MCF 10A (cell line): ENCODE measurements at regions of chr18 and their contacts with region 1.

Region 1: GRCh38 chr18:12639990-12640880 is 17.7 kb downstream of the SPIRE1 start:
- DNase-seq: peak; percentile 79
- H3K4me3 Mint-ChIP-seq: peak overlapping the region; percentile 36
- H3K27ac Mint-ChIP-seq: peak overlapping the region; percentile 92
- H3K4me1 Mint-ChIP-seq: peaks cover 45% of the 10 kb centered on the region
- H3K27me3 Mint-ChIP-seq: no peaks in the 10 kb centered on the region
- CTCF ChIP-seq: no peak

Region 2: DNA sequence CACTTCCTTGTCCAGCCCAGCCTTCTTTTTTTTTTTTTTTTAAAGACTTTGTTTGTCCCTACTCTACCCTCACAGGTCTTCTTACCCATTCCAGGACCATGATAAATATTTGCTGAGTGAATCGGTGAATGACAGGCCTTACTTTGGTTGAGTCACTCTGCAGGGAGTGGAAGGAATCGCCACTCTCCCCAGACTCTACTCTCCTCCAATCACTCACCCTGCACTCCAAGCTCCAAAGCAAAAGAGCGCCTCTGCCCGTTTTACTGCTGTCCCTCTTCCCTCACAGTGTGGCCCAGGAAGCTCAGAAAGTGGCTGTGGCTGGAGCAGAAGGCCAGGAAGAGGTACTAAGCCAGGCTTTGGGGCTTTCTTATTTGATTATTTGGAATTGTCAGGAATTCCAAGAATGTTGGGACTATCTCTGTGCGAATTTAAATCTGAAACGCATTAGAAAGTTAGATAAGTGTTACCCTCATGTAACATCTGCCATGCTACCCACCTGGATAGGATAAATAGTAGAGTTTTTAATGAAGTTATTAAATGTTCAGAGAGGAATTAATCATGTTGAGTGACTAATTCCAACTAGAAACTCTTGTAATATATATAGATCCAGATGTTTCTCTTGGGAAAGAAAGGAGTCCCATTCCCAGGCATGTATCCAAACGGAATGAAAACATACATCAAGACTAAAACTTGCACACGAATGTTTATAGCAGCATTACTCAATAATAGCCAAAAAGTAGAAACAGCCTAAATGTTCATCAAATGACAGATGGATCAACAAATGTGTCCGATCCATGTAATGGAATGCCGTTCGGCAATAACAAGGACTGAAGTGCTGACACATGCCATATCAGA is 832.0 kb before region 1 on chr18:
- CTCF ChIA-PET with region 1: no interaction called
- POLR2A ChIA-PET with region 1: no interaction called
- intact Hi-C with region 1: no loop called
- DNase-seq: peak; percentile 36
- H3K4me3 Mint-ChIP-seq: no peak overlapping the region
- H3K27ac Mint-ChIP-seq: no peak overlapping the region
- H3K4me1 Mint-ChIP-seq: peaks cover 15% of the 10 kb centered on the region
- H3K27me3 Mint-ChIP-seq: peaks cover 28% of the 10 kb centered on the region
- CTCF ChIP-seq: no peak

Region 3: GRCh38 chr18:12585218-12585617 is 55.0 kb before region 1 on chr18:
- CTCF ChIA-PET with region 1: no interaction called
- POLR2A ChIA-PET with region 1: no interaction called
- intact Hi-C with region 1: no loop called
- DNase-seq: peak; percentile 19
- H3K4me3 Mint-ChIP-seq: no peak overlapping the region
- H3K27ac Mint-ChIP-seq: no peak overlapping the region
- H3K4me1 Mint-ChIP-seq: peaks cover 22% of the 10 kb centered on the region
- H3K27me3 Mint-ChIP-seq: no peaks in the 10 kb centered on the region
- CTCF ChIP-seq: no peak

Region 4: GRCh38 chr18:12597775-12598174 is 42.5 kb before region 1 on chr18:
- CTCF ChIA-PET with region 1: interaction called, 5 read pairs
- POLR2A ChIA-PET with region 1: interaction called, 15 read pairs
- intact Hi-C with region 1: no loop called
- DNase-seq: peak; percentile 83
- H3K4me3 Mint-ChIP-seq: peak overlapping the region; percentile 3
- H3K27ac Mint-ChIP-seq: peak overlapping the region; percentile 84
- H3K4me1 Mint-ChIP-seq: peaks cover 36% of the 10 kb centered on the region
- H3K27me3 Mint-ChIP-seq: no peaks in the 10 kb centered on the region
- CTCF ChIP-seq: no peak

Region 5: GRCh38 chr18:12628706-12629702 is 11.2 kb before region 1 on chr18:
- CTCF ChIA-PET with region 1: interaction called, 3 read pairs
- POLR2A ChIA-PET with region 1: interaction called, 24 read pairs
- intact Hi-C with region 1: no loop called
- DNase-seq: peak; percentile 52
- H3K4me3 Mint-ChIP-seq: no peak overlapping the region
- H3K27ac Mint-ChIP-seq: peak overlapping the region; percentile 71
- H3K4me1 Mint-ChIP-seq: peaks cover 26% of the 10 kb centered on the region
- H3K27me3 Mint-ChIP-seq: no peaks in the 10 kb centered on the region
- CTCF ChIP-seq: no peak